GM13977 (cell line): ENCODE measurements at regions of chr5 and their contacts with region 1.

Region 1: GRCh38 chr5:103808464-103809106 is 246.0 kb upstream of the NUDT12 start:
- DNase-seq: peak; percentile 58
- CTCF ChIP-seq: peak; percentile 89

Region 2: DNA sequence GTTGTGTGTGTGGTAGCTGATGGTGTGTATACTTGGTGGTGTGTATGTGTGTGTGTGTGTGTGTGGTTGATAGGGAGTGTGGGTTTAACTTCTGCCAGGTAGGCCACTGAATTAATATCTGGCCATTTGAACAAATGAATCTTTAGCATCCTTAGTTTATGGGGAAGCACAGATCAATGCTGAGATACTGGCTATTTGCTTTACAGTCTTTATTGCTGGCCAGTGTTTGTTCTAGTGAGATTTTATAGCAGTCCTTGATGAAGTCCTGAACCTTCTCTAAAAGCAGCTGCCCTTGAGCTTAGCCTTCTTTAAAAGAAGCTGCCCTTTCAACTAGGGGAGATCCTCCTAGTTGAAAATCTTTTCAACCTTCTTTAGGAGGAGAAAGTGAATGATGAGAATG is 480.7 kb before region 1 on chr5:
- in situ Hi-C with region 1: no loop called
- DNase-seq: no peak
- CTCF ChIP-seq: no peak

Region 3: DNA sequence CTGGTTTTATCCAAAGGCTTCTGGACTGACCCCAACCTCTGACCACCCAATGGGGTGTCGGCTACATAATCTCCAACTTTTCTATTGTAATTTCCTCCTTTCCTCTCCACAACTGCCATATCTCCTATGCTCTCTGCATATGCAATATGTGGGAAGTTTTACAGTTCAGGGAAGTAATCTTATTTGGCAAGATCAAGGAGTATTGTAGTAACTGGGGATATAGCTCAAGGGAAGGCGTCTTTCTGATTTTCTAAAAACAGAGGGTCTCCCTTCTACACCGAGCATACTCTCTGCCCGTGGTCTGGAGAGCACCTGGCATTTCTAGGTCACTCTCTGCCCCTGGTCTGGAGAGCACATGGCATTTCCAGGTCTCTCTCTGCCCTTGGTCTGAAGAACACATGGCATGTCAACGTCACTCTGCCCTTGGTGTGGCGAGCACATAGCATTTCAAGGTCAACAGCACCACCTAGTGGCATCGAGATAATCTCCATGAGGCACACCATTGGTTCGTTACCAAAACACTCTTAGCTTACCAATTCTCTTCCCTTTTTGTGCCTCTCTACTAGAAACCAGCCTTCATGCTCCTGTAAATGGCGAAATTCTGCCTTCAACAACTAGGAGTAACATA is 370.4 kb after region 1 on chr5:
- in situ Hi-C with region 1: loop called (anchors 25 kb)
- DNase-seq: peak; percentile 29
- CTCF ChIP-seq: peak; percentile 80

Region 4: GRCh38 chr5:104385896-104386295 is 577.3 kb after region 1 on chr5:
- in situ Hi-C with region 1: no loop called
- DNase-seq: no peak
- CTCF ChIP-seq: no peak